ENCODE measurements at regions of chr9 and their contacts with region 1.

Region 1: DNA sequence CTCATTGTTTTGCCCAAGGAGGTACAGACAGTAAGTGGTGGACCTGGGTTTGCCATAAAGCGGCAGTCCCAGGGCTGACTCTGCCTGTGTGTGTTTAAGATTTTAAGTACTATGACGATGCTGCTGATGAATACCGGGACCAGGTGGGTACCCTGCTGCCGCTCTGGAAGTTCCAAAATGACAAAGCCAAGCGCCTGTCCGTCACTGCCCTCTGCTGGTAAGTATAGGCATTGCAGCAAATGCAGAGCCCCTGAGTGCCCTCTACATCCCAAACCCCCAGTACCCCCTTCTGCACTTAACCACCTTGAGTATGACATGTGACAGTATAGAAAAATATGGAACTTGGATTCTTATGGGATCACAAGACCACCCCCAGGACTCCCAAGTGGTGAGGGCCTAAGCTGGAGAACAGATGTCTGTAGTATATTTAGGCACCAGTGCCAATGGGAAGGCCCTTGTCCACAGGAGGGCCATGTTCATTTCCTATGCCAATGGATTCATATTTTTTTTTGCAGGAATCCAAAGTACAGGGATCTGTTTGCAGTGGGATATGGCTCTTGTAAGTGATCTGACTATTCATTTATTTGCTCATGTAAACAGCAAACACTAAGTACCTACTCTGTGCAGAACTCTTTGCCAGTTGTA is 22.0 kb downstream of the ENHO start:
- DNase-seq: peak; percentile 41 to 90 (median 76)

Region 2: GRCh38 chr9:34332076-34332964 is 168.4 kb before region 1 on chr9:
- intact Hi-C with region 1: loop called (anchors 5 kb)
- DNase-seq: peak in 17 of 42 donors; percentile 32 to 80 (median 50)

Region 3: GRCh38 chr9:34403554-34404380 is 97.0 kb before region 1 on chr9:
- intact Hi-C with region 1: loop called (anchors 5 kb)
- DNase-seq: peak; percentile 50 to 93 (median 83)

Region 4: GRCh38 chr9:34458013-34458958 is 42.5 kb before region 1 on chr9 and contains the starts of genes DNAI1 and FAM219A:
- intact Hi-C with region 1: loop called (anchors 5 kb)
- DNase-seq: peak; percentile 98 to 100 (median 100)

Region 5: DNA sequence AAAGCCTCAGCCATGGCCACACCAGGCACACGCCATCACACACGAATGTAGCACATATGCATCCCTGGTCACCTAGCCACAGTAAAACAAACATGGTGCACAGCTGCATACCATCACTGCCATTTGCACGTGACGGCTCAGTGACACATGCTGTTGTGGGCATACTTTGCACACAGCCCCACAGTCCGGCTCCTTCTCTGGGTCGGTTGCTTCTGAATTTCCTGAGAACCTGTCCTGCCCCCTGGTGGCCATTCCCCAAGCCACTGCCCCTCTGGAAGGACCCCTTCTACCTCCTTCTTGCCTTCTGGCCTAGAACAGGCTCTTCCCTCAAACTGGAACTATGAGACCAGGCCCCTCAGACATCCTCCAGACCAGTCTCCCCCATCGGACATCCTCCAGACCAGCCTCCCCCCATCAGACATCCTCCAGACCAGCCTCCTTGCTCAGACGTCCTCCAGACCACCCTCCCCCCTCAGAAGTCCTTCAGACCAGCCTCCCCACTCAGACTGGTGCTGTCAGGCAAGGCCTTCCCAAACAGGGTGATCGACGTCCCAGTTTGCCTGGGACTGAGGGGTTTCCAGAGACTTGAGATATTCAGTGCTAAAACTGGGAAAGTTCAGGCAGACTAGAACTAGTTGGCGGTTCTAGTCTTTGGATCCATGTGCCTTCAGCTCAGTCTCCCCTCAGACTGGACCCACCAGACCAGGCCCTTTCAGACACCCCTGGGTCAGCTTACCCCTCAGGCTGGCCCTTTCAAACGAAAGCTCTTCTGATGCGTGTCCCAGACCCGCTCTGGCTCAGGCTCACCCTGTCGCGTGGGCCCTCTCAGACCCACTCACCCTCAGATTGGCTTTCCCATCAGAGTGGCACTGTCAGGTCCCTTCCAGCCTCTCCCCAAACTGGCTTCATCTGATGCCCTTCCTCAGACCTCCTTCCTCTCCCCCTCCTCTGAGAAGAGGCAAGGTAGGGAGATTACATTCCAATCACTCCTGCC is 46.4 kb after region 1 on chr9:
- intact Hi-C with region 1: loop called (anchors 5 kb)
- DNase-seq: peak in 41 of 42 donors; percentile 67 to 95 (median 82)

Region 6: DNA sequence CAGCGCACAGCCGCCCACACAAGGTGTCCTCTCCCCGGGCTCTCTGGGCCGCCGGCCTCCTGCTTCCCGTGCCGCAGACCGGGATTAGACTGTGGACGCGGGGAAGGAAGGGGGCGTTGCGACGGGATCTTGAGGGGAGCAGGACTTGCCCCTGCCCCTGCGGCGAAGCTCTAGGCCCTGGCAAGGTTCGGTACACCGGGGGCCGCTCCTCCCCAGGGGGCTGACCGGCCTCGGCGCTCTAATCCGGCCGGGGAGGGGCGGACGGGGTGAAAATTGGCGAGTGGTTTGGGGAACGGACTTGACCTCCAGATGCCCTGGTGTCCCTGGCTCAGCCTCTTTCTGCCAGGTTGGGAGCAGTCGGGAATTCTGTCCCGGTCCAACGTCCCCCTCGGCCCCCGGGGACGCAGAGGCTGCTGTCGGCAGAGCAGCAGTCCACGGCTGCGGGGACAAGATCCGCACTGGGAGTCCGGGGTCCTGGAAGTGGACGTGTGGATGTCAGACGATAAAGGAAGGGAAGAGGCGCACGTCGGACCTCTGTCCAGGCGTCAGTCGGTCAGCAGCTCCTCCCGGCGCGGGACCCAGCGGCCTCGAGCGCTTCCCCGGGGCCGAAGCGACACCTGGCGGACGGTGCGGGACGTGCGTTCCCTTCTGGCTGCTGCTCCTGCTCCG is 90.6 kb after region 1 on chr9:
- intact Hi-C with region 1: loop called (anchors 5 kb)
- DNase-seq: peak; percentile 71 to 97 (median 92)

Region 7: GRCh38 chr9:34606905-34607304 is 106.2 kb after region 1 on chr9:
- intact Hi-C with region 1: loop called (anchors 5 kb)
- DNase-seq: no peak

Measured in head of caudate nucleus (tissue), 42 donors.